ENCODE measurements at regions of chr4 and their contacts with region 1.

Region 1: DNA sequence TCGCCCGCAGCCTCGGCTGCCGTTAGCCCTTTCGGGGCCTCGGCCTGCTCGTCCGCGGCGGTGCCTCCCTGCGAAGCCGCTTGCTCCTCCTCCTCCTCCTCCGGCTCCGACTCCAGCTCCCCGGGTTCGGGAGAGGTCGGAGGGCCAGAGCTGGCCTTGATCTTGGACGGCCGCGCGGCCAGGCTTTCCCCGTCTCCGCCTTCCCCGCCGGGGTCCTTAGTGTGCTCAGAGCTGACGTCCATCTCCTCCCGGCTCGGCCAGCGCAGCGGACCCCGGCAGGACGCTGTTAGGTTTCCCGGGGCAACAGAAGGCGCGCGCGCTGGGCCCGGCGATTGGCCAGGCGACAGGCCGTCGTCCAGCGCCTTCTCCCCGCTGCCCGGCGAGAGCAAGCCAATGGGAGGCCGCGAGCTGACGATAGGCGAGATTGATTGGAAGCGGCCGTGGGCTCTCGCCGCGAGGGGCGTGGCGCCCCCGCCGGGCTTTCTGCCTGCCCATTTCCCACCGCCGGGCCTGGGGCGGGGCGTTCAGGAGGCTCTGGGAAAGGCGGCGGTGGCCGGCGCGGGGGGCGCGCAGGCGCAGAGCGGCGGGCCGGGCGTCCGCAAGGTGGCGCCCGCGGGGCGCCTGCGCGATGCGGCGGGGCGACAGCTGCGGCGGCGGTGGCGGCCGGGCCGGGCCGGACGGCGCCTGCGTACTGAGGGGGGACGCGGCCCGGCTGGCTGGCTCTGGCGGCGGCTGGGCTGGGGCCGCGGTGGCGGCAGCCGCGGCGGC is at the start of gene TADA2B:
- DNase-seq: peak; percentile 98
- H3K4me3 ChIP-seq: peak within 1 kb of the TSS; percentile 69 to 91 (median 75)
- H3K27ac ChIP-seq: peak within 1 kb of the TSS; percentile 68
- H3K4me1 ChIP-seq: peaks cover 17% of the 10 kb centered on the region
- H3K27me3 ChIP-seq: no peaks in the 10 kb centered on the region
- CTCF ChIP-seq: peak; percentile 8 to 32
- POLR2A ChIP-seq: no peak
- total RNA-seq, gene TADA2B: 11.5 and 12.3 TPM in 2 replicates

Region 2: GRCh38 chr4:6783053-6783981 is 259.6 kb before region 1 on chr4:
- CTCF ChIA-PET with region 1: no interaction called
- POLR2A ChIA-PET with region 1: no interaction called
- dilution Hi-C with region 1: no loop called
- intact Hi-C with region 1: loop called (anchors 10 kb)
- DNase-seq: peak; percentile 84
- H3K4me3 ChIP-seq: peak overlapping the region; percentile 75 to 99 (median 83)
- H3K27ac ChIP-seq: peak overlapping the region; percentile 89
- H3K4me1 ChIP-seq: peaks cover 10% of the 10 kb centered on the region
- H3K27me3 ChIP-seq: no peaks in the 10 kb centered on the region
- CTCF ChIP-seq: no peak
- POLR2A ChIP-seq: no peak

Region 3: GRCh38 chr4:6974138-6974848 is 68.6 kb before region 1 on chr4:
- CTCF ChIA-PET with region 1: interaction called, 29 read pairs
- POLR2A ChIA-PET with region 1: interaction called, 3 read pairs
- dilution Hi-C with region 1: no loop called
- intact Hi-C with region 1: loop called (anchors 1 kb)
- DNase-seq: peak; percentile 90
- H3K4me3 ChIP-seq: no peak overlapping the region
- H3K27ac ChIP-seq: no peak overlapping the region
- H3K4me1 ChIP-seq: no peaks in the 10 kb centered on the region
- H3K27me3 ChIP-seq: no peaks in the 10 kb centered on the region
- CTCF ChIP-seq: peak; percentile 93 to 95
- POLR2A ChIP-seq: no peak

Region 4: DNA sequence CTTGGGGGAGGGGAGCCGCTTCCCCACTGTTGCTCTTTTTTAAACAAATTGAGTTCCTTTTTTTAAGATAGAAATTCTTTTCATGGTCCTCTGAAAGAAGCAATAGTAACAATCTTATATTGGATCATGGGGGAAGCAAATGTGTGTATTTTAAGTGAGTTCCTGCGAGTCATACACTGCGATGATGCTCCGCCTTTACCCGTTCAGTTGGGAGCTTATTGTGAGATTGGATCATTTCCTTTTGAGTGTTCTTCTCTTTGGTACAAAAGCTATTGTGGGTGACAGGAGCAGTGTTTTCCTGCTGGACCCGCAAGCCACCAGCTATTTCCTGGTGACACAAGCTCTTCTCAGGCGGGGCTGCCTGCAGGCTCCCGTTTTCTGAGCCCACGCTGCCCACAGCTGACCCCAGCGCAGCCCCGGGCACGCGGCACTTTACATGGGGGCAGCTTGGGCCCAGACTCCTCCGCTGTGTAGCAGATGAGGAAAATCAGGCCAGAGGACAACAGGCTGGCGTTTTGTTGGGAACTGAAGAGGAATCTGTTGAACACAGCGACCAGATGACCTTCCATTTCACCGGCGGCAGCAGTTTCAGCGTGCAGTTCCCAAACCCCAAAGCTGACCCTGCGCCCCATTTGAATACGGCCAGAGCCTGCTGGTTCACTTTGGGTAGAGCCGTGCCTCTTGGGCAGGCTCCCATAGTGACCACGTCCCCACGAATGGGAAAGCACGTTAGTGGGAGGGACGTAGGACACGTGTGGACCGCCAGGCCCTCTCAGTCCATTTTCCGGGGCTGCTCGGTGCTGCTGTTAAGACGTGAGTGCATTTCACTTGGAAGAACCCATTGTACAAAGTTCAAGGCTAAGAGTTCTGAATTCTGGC is 12.5 kb after region 1 on chr4:
- CTCF ChIA-PET with region 1: interaction called, 16 read pairs
- POLR2A ChIA-PET with region 1: interaction called, 3 read pairs
- dilution Hi-C with region 1: no loop called
- intact Hi-C with region 1: loop called (anchors 1 kb)
- DNase-seq: peak; percentile 27
- H3K4me3 ChIP-seq: no peak overlapping the region
- H3K27ac ChIP-seq: peak overlapping the region; percentile 40
- H3K4me1 ChIP-seq: peaks cover 13% of the 10 kb centered on the region
- H3K27me3 ChIP-seq: no peaks in the 10 kb centered on the region
- CTCF ChIP-seq: no peak
- POLR2A ChIP-seq: no peak

Region 5: GRCh38 chr4:7067452-7068278 is 24.8 kb after region 1 on chr4 and contains the start of gene GRPEL1:
- CTCF ChIA-PET with region 1: interaction called, 41 read pairs
- POLR2A ChIA-PET with region 1: interaction called, 10 read pairs
- dilution Hi-C with region 1: no loop called
- intact Hi-C with region 1: loop called (anchors 1 kb)
- DNase-seq: peak; percentile 100
- H3K4me3 ChIP-seq: peak within 1 kb of the TSS; percentile 62 to 99 (median 71)
- H3K27ac ChIP-seq: peak within 1 kb of the TSS; percentile 57
- H3K4me1 ChIP-seq: peaks cover 20% of the 10 kb centered on the region
- H3K27me3 ChIP-seq: peaks cover 0 to 3% of the 10 kb centered on the region in 2 experiments
- CTCF ChIP-seq: no peak
- POLR2A ChIP-seq: peak; percentile 94
- total RNA-seq, gene GRPEL1: 42.6 and 47.3 TPM in 2 replicates

Region 6: DNA sequence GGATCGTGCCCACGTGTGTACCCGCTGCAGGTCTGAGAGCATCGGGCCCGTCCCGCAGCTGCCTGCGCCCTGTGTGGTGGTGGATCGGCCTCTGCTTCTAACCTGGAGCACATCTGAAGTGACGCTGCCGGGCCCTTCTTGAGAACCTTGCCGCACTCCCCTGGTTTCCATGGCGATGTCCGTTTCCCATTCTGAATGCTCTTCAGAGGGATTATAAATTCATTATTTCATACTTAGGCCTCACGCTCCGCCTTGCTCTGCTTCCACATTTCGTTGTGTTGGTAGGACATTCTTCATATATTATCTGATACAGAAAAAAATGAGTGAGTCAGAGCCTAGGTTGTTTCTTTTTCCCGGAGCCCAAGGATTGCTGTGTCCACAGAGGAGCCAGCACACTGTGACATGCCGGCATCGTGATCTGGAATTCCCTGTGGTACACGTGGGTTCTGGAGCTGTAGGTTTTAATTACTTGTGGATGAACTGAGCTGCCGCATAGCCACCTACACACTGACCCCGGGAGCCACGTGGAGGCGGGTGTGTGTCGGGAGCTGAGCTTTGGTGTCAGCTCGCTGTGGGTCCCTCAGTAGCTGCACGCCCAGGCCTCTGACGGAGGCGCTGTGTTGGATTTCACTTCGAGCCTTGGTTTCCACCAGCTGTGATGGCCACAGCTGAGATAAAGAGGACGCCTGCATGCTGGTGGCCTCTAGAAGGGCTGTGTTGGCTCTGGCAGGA is 328.5 kb after region 1 on chr4:
- CTCF ChIA-PET with region 1: no interaction called
- POLR2A ChIA-PET with region 1: no interaction called
- dilution Hi-C with region 1: no loop called
- intact Hi-C with region 1: no loop called
- DNase-seq: no peak
- H3K4me3 ChIP-seq: no peak overlapping the region
- H3K27ac ChIP-seq: no peak overlapping the region
- H3K4me1 ChIP-seq: no peaks in the 10 kb centered on the region
- H3K27me3 ChIP-seq: no peaks in the 10 kb centered on the region
- CTCF ChIP-seq: no peak
- POLR2A ChIP-seq: no peak

Measured in endothelial cell of umbilical vein (primary cell).